PC-3 (cell line): ENCODE measurements at regions of chr14 and their contacts with region 1.

Region 1: GRCh38 chr14:101834800-101835547 is 73.5 kb downstream of the PPP2R5C start:
- DNase-seq: peak; percentile 57
- ATAC-seq: peak; percentile 94
- H3K4me3 ChIP-seq: no peak overlapping the region
- H3K27ac ChIP-seq: peak overlapping the region; percentile 60
- H3K4me1 ChIP-seq: peaks cover 19% of the 10 kb centered on the region
- H3K27me3 ChIP-seq: no peaks in the 10 kb centered on the region
- CTCF ChIP-seq: no peak

Region 2: DNA sequence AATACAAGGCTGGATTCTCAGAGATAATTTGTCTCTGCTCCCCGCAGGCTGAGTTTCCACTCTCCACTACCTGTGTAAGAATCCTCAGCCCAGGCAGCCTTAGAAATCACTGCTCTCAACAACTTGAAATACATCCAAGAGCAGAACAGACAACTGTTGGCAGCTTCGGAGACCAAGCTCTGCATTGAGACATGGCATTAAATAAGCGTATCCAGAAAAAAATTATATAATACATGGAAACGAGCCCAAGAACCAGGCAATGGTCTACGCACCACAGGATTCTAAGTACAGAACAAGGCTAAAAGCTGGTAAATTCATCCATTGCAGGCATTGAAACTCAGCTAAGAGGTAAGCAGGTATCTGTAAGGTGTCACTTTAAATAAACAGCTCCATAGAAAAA is 439.2 kb before region 1 on chr14:
- CTCF ChIA-PET with region 1: no interaction called
- POLR2A ChIA-PET with region 1: no interaction called
- intact Hi-C with region 1: no loop called
- DNase-seq: no peak
- ATAC-seq: no peak
- H3K4me3 ChIP-seq: no peak overlapping the region
- H3K27ac ChIP-seq: no peak overlapping the region
- H3K4me1 ChIP-seq: no peaks in the 10 kb centered on the region
- H3K27me3 ChIP-seq: no peaks in the 10 kb centered on the region
- CTCF ChIP-seq: no peak

Region 3: GRCh38 chr14:101687756-101688546 is 147.0 kb before region 1 on chr14:
- CTCF ChIA-PET with region 1: no interaction called
- POLR2A ChIA-PET with region 1: interaction called, 11 read pairs
- intact Hi-C with region 1: no loop called
- DNase-seq: no peak
- ATAC-seq: no peak
- H3K4me3 ChIP-seq: no peak overlapping the region
- H3K27ac ChIP-seq: no peak overlapping the region
- H3K4me1 ChIP-seq: no peaks in the 10 kb centered on the region
- H3K27me3 ChIP-seq: no peaks in the 10 kb centered on the region
- CTCF ChIP-seq: no peak

Region 4: DNA sequence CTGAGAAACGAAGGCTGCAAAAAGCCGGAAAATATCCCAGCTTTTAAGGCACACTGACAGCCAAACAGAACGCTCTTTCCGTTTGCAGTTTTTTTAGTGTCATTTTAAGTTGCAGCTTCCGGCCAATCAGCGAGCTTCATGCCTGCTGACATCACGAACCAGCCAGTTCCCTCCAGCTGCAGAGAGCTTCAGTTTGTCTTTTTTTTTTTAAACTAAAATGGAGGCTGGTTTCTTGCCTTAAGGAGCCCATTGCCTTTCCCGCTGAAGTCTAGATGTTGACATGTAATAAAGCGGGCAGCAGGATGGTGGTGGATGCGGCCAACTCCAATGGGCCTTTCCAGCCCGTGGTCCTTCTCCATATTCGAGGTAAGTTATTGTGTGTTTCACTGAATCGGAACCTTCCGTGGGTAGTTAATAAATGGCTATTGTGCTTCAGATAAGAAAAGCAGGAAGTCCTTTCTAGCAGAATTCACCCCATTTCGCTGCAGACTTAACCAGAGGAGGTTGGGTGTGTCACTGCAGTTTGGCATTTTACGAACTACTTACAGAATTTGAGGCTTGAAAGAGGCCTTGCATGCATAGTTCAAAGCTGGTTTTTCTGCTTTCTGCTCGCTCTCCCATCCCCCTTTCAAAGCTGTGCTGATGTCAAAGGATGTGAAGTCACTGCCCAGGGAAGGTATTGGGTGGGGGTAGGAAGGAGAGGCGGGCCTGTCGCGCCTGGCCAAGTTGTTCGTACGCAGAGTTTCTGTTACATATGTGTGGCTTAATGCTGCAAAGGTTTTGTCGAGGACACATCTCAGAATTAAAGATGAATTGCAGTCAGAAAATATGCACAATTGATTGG is 25.1 kb before region 1 on chr14:
- CTCF ChIA-PET with region 1: no interaction called
- POLR2A ChIA-PET with region 1: interaction called, 10 read pairs
- intact Hi-C with region 1: no loop called
- DNase-seq: peak; percentile 93
- ATAC-seq: peak; percentile 92
- H3K4me3 ChIP-seq: peak overlapping the region; percentile 72
- H3K27ac ChIP-seq: peak overlapping the region; percentile 98
- H3K4me1 ChIP-seq: peaks cover 50% of the 10 kb centered on the region
- H3K27me3 ChIP-seq: no peaks in the 10 kb centered on the region
- CTCF ChIP-seq: no peak